Dorsolateral prefrontal cortex (tissue), 120 donors: ENCODE measurements at regions of chr15 and their contacts with region 1.

Region 1: DNA sequence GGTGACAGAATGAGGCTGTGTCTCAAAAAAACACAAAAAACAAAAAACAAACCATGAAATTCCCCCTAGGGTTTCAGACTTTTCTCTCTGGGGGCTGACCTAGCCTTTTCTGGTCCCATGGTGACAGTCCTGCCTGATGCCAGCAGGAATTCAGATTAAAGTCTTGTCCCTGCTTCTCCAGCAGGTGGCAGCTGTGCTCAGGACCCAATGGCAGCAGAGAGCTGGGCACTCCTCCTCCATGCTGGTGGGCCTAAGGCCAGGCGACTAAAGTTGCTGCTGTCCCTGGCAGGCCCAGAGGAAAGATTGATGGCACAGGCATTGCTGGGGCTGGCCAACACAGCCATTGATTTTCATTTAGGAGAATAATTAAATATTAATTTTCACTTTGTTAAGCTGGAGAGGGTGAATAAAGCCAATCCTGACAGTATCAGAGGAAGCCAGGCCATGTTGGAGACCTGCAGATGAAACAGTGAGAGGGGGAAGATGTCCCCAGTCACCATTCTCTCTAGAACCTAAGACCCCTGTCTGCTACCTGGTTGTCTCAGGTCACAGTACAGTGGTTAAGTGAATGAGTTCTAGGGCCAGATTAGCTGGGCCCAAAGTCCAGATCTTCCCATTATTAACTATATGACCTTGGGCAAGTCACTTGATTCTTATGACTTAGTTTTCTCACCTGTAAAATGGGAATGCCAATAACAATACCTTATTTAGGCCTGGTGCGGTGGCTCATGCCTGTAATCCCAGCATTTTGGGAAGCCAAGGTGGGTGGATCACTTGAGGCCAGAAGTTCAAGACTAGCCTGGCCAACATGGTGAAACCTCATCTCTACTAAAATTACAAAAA is 7.1 kb downstream of the CELF6 start:
- DNase-seq: peak; percentile 33 to 71 (median 60)
- H3K4me3 ChIP-seq: no peak overlapping the region
- H3K27ac ChIP-seq: peak overlapping the region in 1 of 59 donors; percentile 4
- H3K27me3 ChIP-seq: no peaks in the 10 kb centered on the region
- CTCF ChIP-seq: peak; percentile 34 to 78 (median 66)

Region 2: GRCh38 chr15:72358650-72359288 is 45.9 kb after region 1 on chr15:
- intact Hi-C with region 1: no loop called
- DNase-seq: peak; percentile 30 to 84 (median 72)
- H3K4me3 ChIP-seq: no peak overlapping the region
- H3K27ac ChIP-seq: peak overlapping the region in 22 of 59 donors; percentile 2 to 55 (median 28)
- H3K27me3 ChIP-seq: no peaks in the 10 kb centered on the region
- CTCF ChIP-seq: no peak

Region 3: DNA sequence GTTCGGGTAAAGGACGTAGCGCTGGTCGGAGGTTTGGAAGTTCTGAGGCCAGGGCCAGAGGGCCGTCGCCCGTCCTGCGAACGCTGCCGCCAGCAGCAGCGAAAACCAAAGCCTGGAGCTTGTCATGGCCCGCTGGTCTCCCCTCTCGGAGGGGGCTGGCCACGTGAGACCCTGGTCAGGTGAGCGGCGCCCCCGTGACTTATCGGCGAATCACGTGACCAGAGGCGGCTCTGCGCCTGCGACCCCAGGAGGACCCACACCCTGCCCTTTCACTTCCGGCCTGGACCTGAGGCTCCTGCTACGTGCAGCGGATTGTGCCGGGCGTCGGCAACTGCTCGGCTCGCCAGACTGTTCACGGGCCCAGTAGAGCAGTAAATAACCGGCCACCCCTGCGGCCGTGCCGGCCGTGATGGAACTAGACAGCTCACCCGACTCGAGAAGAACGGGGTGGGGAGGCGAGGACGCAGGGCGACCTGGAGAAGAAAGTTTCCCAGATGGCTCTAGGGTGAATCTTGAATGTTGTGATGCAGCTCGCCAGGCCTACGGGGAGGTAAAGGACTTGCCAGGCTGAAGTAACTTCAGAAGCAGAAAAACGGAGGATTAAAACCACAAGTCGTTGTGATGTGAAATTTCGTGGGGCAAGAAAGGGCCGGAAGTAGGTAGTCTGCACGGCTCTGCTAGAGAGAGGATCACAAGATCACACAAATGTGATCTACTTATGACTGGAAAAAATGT is 63.2 kb after region 1 on chr15 and contains the start of gene HEXA:
- intact Hi-C with region 1: loop called in 1 of 2 experiments (anchors 10 kb)
- DNase-seq: peak; percentile 88 to 96 (median 94)
- H3K4me3 ChIP-seq: peak within 1 kb of the TSS; percentile 69 to 100 (median 96)
- H3K27ac ChIP-seq: peak within 1 kb of the TSS; percentile 49 to 98 (median 90)
- H3K27me3 ChIP-seq: no peaks in the 10 kb centered on the region
- CTCF ChIP-seq: peak in 30 of 56 donors; percentile 6 to 47 (median 30)
- total RNA-seq, gene HEXA: 59.4 to 109 (median 80.2) TPM